Activated CD4-positive, alpha-beta T cell treated with anti-CD3 and anti-CD28 coated beads for 36 hours (primary cell): ENCODE measurements at regions of chr7 and their contacts with region 1.

Region 1: DNA sequence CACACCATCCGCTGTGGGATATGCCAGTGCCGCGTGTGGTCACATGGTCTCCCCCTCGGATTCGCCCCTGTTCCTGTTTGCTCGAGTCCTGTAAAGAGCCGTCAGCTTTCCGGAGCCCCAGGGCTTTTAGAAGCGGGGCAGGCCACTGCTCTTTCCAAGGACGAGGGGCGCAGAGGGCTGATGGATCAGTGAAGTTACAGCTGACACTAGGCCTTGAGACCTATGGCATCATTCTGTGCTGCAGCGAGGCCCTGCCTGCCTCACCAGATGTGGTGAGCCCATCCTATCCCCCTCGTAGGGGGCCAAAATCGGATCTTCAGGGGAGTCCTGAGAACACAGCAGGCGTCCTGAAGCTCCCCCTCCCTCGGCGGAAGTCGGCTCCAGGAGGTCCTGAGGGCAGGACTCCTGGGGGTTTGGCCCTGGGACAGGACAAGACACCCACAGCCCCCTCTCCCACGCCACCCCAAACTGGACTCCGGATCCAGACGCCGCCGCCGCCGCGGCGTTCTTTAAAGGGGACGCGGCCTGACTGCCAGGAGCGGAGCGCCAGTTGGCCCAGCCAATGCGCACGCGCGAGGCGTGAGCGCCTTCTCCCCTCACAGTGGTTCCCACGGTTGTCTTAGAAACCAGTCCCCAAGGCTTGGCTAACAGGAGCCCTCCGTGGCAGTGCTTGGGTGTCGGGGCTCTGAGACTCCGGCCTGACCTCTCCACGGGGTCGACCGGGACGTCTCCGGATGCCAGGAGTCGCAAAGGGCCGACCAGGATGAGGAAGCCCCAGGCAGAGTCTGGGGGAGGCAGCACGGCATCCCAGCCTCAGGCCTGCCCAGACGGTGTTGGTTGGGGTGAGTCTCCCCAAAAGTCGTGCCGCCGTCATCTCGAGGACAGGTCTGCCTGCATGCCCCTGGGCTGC is 371.7 kb downstream of the ZNF716 start:
- DNase-seq: no peak
- ATAC-seq: no peak
- H3K4me3 Mint-ChIP-seq: no peak overlapping the region
- H3K27ac Mint-ChIP-seq: no peak overlapping the region
- H3K4me1 Mint-ChIP-seq: no peaks in the 10 kb centered on the region
- H3K27me3 Mint-ChIP-seq: no peaks in the 10 kb centered on the region

Region 2: DNA sequence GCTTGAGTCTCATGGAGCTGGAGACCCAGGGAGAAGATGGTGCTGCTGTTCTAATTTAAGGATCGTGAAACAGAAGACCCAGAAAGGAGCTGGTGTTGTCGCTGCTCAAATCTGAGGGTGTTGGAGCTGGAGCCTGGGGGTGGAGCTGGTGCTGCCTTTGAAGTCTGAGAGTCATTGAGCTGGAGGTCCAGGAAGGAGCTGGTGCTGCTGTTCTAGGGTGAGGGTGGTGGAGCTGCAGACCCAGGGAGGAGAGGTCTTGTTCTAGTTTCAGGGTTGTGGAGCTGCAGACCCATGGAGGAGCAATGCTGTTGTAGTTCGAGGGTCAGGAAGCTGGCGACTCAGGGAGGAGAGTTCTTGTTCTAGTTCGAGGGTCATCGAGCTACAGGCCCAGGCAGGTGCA is 605.4 kb before region 1 on chr7:
- CTCF ChIA-PET with region 1: no interaction called
- POLR2A ChIA-PET with region 1: no interaction called
- intact Hi-C with region 1: no loop called
- DNase-seq: no peak
- ATAC-seq: no peak
- H3K4me3 Mint-ChIP-seq: no peak overlapping the region
- H3K27ac Mint-ChIP-seq: no peak overlapping the region
- H3K4me1 Mint-ChIP-seq: no peaks in the 10 kb centered on the region
- H3K27me3 Mint-ChIP-seq: no peaks in the 10 kb centered on the region

Region 3: DNA sequence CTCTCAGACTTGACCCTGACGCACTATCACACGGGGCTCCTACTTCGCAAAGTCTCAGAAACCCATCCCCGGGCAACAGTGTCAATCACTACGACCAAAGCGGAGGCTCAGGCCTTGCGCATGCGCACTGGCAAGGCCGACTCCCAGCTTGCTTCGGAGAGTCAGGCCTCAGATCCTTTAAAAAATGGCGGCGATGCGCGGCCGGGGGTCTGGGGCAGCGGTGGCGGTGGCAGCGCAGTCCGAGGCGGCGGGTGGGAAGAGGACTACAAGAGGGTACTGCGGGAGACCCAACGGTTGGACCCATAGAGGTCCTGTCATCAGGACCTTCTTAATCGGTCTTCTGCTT is 174.8 kb before region 1 on chr7:
- CTCF ChIA-PET with region 1: no interaction called
- POLR2A ChIA-PET with region 1: no interaction called
- intact Hi-C with region 1: loop called (anchors 10 kb)
- DNase-seq: no peak
- ATAC-seq: no peak
- H3K4me3 Mint-ChIP-seq: no peak overlapping the region
- H3K27ac Mint-ChIP-seq: no peak overlapping the region
- H3K4me1 Mint-ChIP-seq: no peaks in the 10 kb centered on the region
- H3K27me3 Mint-ChIP-seq: no peaks in the 10 kb centered on the region

Region 4: GRCh38 chr7:57867884-57868701 is 46.4 kb after region 1 on chr7:
- CTCF ChIA-PET with region 1: no interaction called
- POLR2A ChIA-PET with region 1: no interaction called
- intact Hi-C with region 1: no loop called
- DNase-seq: peak; percentile 5
- ATAC-seq: no peak
- H3K4me3 Mint-ChIP-seq: peak overlapping the region; percentile 40
- H3K27ac Mint-ChIP-seq: no peak overlapping the region
- H3K4me1 Mint-ChIP-seq: peaks cover 2% of the 10 kb centered on the region
- H3K27me3 Mint-ChIP-seq: peaks cover 24% of the 10 kb centered on the region

Region 5: DNA sequence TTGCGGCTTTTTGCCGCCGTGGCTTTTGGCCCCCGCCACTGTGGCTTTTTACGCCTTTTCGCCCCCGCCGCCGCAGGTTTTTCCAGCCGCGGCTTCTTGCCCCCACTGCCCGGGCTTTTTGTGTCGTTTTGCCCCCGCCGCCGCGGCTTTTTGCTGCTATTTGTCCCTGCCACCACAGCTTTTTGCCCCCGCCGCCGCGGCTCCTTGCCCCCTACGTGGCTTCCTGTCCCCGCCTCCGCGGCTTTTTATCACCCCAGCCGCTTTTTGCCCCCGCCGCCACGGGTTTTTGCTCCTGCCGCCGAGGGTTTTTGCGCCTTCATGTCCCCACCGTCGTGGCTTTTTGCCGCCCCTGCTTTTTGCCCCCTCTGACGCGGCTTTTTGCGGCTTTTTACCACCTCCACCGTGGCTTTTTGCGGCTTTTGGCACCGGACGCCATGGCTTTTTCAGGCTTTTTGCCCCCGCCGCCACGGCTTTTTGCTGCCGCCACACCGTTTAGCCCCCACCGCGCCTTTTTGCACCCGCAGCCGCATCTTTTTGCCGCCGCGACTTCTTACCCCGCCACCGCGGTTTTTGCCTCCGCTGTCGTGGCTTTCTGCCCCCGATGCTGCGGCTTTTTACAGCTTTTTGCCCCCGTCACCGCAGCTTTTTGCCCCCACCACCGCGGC is 265.3 kb after region 1 on chr7:
- CTCF ChIA-PET with region 1: no interaction called
- POLR2A ChIA-PET with region 1: no interaction called
- intact Hi-C with region 1: no loop called
- DNase-seq: no peak
- ATAC-seq: no peak
- H3K4me3 Mint-ChIP-seq: no peak overlapping the region
- H3K27ac Mint-ChIP-seq: no peak overlapping the region
- H3K4me1 Mint-ChIP-seq: no peaks in the 10 kb centered on the region
- H3K27me3 Mint-ChIP-seq: no peaks in the 10 kb centered on the region